ENCODE measurements at regions of chr21 and their contacts with region 1.

Region 1: GRCh38 chr21:32392880-32393676 is at the start of gene URB1:
- DNase-seq: peak; percentile 88 to 99 (median 94)
- ATAC-seq: peak; percentile 99
- H3K4me3 ChIP-seq: peak within 1 kb of the TSS; percentile 85
- H3K4me3 Mint-ChIP-seq: peak within 1 kb of the TSS; percentile 81 to 92 (median 86)
- H3K27ac ChIP-seq: peak within 1 kb of the TSS; percentile 70
- H3K27ac Mint-ChIP-seq: peak within 1 kb of the TSS; percentile 46 to 90 (median 71)
- H3K4me1 ChIP-seq: peaks cover 8 to 12% of the 10 kb centered on the region in 2 donors
- H3K4me1 Mint-ChIP-seq: peaks cover 34 to 52% (median 43%) of the 10 kb centered on the region in 7 donors
- H3K27me3 ChIP-seq: no peaks in the 10 kb centered on the region
- H3K27me3 Mint-ChIP-seq: peaks cover 2 to 20% (median 3%) of the 10 kb centered on the region in 5 donors
- total RNA-seq, gene URB1: 14.5 to 20.6 (median 17.9) TPM

Region 2: GRCh38 chr21:32233055-32233546 is 160.0 kb before region 1 on chr21:
- CTCF ChIA-PET with region 1: no interaction called
- POLR2A ChIA-PET with region 1: no interaction called
- intact Hi-C with region 1: no loop called
- DNase-seq: no peak
- ATAC-seq: no peak
- H3K4me3 ChIP-seq: no peak overlapping the region
- H3K4me3 Mint-ChIP-seq: no peak overlapping the region
- H3K27ac ChIP-seq: no peak overlapping the region
- H3K27ac Mint-ChIP-seq: no peak overlapping the region
- H3K4me1 ChIP-seq: no peaks in the 10 kb centered on the region
- H3K4me1 Mint-ChIP-seq: no peaks in the 10 kb centered on the region
- H3K27me3 ChIP-seq: no peaks in the 10 kb centered on the region
- H3K27me3 Mint-ChIP-seq: peaks cover 0 to 5% (median 0%) of the 10 kb centered on the region in 5 donors

Region 3: DNA sequence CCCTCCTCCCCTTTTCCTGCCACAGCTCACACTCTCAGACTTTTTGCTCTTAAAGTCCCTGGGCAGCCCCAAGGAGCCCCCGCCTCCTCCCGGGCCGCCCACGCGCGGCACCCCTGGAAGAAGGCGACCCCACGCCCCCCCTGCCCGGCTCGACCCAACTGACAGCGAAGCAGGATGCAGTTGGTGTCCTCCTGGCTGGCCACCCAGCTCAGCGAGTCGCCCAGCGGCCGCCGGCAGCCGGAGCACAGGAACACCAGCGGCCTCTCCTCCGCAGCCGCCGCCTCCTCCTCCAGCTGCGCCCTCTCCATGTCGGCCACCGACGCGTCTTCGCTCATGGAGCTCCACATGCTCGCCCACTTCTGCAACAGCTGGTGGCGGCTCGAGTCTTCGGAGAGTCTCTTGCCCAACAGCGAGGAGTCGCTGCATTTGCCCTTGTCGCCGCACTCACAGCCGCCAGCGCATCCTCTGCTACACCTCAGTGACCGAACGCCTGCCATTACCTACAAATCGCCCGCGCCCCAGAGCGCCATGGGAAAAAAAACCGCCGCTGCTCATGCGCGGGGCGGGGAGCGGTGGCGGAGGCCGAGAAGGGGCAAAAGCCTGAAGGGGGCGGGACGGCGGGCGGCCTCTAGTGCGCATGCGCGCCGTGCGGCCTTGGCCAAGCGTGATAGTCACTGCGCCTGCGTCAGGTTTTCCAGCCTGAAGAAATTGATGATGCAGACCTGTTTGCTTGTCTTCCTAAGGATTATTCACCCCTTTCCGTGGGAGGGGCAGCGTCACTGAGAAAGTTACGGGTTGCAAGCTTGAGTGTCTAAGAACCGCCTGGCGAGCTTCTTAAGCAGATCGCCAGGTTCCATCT is 114.3 kb before region 1 on chr21 and contains the start of gene MIS18A:
- CTCF ChIA-PET with region 1: no interaction called
- POLR2A ChIA-PET with region 1: no interaction called
- intact Hi-C with region 1: loop called (anchors 1 kb)
- DNase-seq: peak; percentile 92 to 98 (median 95)
- ATAC-seq: peak; percentile 97
- H3K4me3 ChIP-seq: peak within 1 kb of the TSS; percentile 90
- H3K4me3 Mint-ChIP-seq: peak within 1 kb of the TSS; percentile 95 to 100 (median 98)
- H3K27ac ChIP-seq: peak within 1 kb of the TSS; percentile 70
- H3K27ac Mint-ChIP-seq: peak within 1 kb of the TSS; percentile 90 to 97 (median 94)
- H3K4me1 ChIP-seq: peaks cover 14 to 16% of the 10 kb centered on the region in 2 donors
- H3K4me1 Mint-ChIP-seq: peaks cover 8 to 36% (median 33%) of the 10 kb centered on the region in 7 donors
- H3K27me3 ChIP-seq: no peaks in the 10 kb centered on the region
- H3K27me3 Mint-ChIP-seq: no peaks in the 10 kb centered on the region
- total RNA-seq, gene MIS18A: 3.3 to 16.4 (median 8.4) TPM

Region 4: GRCh38 chr21:32403201-32403777 is 10.2 kb after region 1 on chr21:
- CTCF ChIA-PET with region 1: interaction called, 5 read pairs
- POLR2A ChIA-PET with region 1: no interaction called
- intact Hi-C with region 1: loop called in 1 of 2 experiments (anchors 1 kb)
- DNase-seq: peak in 7 of 9 donors; percentile 43 to 54 (median 50)
- ATAC-seq: peak; percentile 87
- H3K4me3 ChIP-seq: no peak overlapping the region
- H3K4me3 Mint-ChIP-seq: no peak overlapping the region
- H3K27ac ChIP-seq: no peak overlapping the region
- H3K27ac Mint-ChIP-seq: no peak overlapping the region
- H3K4me1 ChIP-seq: peaks cover 0 to 4% of the 10 kb centered on the region in 2 donors
- H3K4me1 Mint-ChIP-seq: peaks cover 0 to 17% (median 0%) of the 10 kb centered on the region in 7 donors
- H3K27me3 ChIP-seq: no peaks in the 10 kb centered on the region
- H3K27me3 Mint-ChIP-seq: peaks cover 0 to 17% (median 12%) of the 10 kb centered on the region in 5 donors

Region 5: DNA sequence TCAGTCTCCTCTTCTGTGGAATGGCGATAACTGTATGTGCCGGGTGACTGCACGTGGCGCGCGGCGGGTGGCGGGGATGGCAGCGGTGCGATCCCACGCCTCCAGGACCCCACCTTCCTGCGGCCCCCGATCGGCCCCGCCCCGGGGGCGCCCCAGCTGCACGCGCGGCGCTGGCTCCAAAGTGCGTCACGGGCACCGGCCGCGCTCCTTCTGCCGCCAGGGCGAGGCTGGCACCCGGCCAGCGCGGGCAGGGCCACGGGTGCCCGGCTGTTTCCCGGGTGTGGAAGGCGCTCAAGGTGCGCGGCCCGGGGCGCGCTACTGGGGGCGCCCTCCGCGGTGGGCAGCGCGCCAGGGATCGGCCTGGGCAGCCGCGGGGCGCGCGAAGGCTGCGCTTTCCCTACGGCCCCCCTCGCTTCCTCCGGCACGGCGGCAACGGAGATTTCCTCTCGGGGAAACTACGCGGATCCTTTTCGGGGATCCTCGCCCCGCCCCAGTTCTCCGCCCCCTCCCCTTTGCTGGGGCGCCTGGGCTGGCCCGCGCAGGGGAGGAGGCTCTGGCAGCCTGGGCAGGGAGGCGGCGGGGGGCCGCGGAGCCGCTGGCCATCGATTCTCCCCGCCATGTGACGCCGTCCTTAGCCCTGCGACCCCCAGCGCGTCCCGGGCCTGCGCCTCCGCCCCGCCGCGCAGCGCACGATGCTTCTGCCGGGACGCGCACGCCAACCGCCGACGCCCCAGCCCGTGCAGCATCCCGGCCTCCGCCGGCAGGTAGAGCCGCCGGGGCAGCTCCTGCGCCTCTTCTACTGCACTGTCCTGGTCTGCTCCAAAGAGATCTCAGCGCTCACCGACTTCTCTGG is 19.3 kb after region 1 on chr21 and contains the start of gene EVA1C:
- CTCF ChIA-PET with region 1: no interaction called
- POLR2A ChIA-PET with region 1: interaction called, 10 read pairs
- intact Hi-C with region 1: loop called (anchors 1 kb)
- DNase-seq: peak; percentile 56 to 73 (median 70)
- ATAC-seq: peak; percentile 81
- H3K4me3 ChIP-seq: peak within 1 kb of the TSS; percentile 76
- H3K4me3 Mint-ChIP-seq: peak within 1 kb of the TSS; percentile 88 to 97 (median 94)
- H3K27ac ChIP-seq: peak within 1 kb of the TSS; percentile 85
- H3K27ac Mint-ChIP-seq: peak within 1 kb of the TSS; percentile 89 to 95 (median 93)
- H3K4me1 ChIP-seq: peaks cover 14 to 29% of the 10 kb centered on the region in 2 donors
- H3K4me1 Mint-ChIP-seq: peaks cover 22 to 57% (median 28%) of the 10 kb centered on the region in 7 donors
- H3K27me3 ChIP-seq: no peaks in the 10 kb centered on the region
- H3K27me3 Mint-ChIP-seq: peaks cover 0 to 7% (median 0%) of the 10 kb centered on the region in 5 donors
- total RNA-seq, gene EVA1C: 2.6 to 16.3 (median 12.3) TPM

Region 6: GRCh38 chr21:32475164-32475812 is 82.2 kb after region 1 on chr21:
- CTCF ChIA-PET with region 1: no interaction called
- POLR2A ChIA-PET with region 1: no interaction called
- intact Hi-C with region 1: no loop called
- DNase-seq: no peak
- ATAC-seq: no peak
- H3K4me3 ChIP-seq: no peak overlapping the region
- H3K4me3 Mint-ChIP-seq: no peak overlapping the region
- H3K27ac ChIP-seq: no peak overlapping the region
- H3K27ac Mint-ChIP-seq: no peak overlapping the region
- H3K4me1 ChIP-seq: no peaks in the 10 kb centered on the region
- H3K4me1 Mint-ChIP-seq: peaks cover 0 to 9% (median 0%) of the 10 kb centered on the region in 7 donors
- H3K27me3 ChIP-seq: no peaks in the 10 kb centered on the region
- H3K27me3 Mint-ChIP-seq: no peaks in the 10 kb centered on the region

Region 7: GRCh38 chr21:32507342-32507919 is 114.4 kb after region 1 on chr21:
- CTCF ChIA-PET with region 1: no interaction called
- POLR2A ChIA-PET with region 1: no interaction called
- intact Hi-C with region 1: no loop called
- DNase-seq: no peak
- ATAC-seq: no peak
- H3K4me3 ChIP-seq: no peak overlapping the region
- H3K4me3 Mint-ChIP-seq: no peak overlapping the region
- H3K27ac ChIP-seq: no peak overlapping the region
- H3K27ac Mint-ChIP-seq: no peak overlapping the region
- H3K4me1 ChIP-seq: no peaks in the 10 kb centered on the region
- H3K4me1 Mint-ChIP-seq: peaks cover 0 to 6% (median 0%) of the 10 kb centered on the region in 7 donors
- H3K27me3 ChIP-seq: no peaks in the 10 kb centered on the region
- H3K27me3 Mint-ChIP-seq: no peaks in the 10 kb centered on the region

Region 8: DNA sequence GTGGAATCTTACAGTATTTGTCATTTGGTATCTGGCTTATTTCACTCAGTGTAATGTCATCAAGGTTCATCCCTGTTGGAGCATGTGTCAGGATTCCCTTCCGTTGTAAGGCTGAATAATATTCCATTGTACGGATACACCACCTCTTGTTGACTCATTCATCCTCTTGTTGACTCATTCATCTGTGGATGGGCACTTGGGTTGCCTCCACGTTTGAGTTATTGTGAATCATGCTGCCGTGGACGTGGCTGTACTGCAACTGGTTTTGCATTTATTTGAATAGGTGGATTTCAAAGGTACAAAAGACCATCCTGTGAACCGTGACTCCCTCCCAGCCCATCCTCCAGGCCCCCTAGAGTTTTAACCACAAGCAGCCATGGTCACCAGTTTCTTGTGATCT is 204.1 kb after region 1 on chr21:
- CTCF ChIA-PET with region 1: interaction called, 9 read pairs
- POLR2A ChIA-PET with region 1: no interaction called
- intact Hi-C with region 1: loop called in 1 of 2 experiments (anchors 2 kb)
- DNase-seq: no peak
- ATAC-seq: no peak
- H3K4me3 ChIP-seq: no peak overlapping the region
- H3K4me3 Mint-ChIP-seq: no peak overlapping the region
- H3K27ac ChIP-seq: no peak overlapping the region
- H3K27ac Mint-ChIP-seq: peak overlapping the region in 1 of 9 donors; percentile 8
- H3K4me1 ChIP-seq: no peaks in the 10 kb centered on the region
- H3K4me1 Mint-ChIP-seq: peaks cover 0 to 4% (median 0%) of the 10 kb centered on the region in 7 donors
- H3K27me3 ChIP-seq: no peaks in the 10 kb centered on the region
- H3K27me3 Mint-ChIP-seq: no peaks in the 10 kb centered on the region

Region 9: DNA sequence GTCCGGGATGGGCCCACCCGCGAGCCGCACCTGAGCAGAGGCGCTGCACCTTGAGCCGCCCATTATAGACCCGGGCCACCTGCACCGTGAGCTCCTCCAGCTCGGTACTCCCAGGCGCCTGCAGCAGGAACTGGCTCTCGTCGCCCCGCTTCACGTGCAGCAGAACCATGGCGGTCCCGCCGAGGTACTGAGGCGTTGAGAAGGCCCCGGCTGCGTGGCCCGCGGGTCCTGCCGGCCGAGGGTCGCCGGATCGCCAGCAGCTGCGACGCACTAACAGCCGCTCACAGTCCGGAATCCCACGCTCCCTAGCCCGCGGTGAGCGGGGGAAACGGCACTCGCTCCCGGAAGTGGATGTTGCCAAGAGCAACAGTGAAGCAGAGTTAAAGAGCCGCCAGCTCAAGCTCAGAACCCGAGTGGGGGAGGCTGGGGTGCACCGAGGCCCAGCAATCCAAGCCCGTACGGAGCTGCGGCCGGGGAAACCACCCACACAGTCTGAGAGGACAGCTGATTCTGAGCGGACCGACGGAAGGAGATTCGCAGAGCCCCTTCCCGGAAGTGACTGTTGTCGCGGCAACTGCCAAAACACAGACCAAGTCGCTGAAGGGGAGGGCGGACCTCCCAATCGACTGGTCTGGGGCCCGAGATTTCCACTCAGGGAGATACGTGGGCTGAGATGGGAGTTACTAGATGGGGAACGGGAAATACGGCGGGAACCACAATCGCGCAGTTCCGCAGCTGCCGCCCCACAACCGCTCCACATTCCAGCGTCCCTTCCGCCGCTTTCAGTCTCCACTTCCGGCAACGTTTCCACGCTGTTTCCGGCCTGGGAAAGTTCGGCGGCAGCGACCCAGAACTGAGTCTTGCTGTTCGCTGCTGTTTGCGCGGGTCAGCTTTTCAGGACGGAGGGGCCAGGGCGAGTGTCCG is 219.3 kb after region 1 on chr21 and contains the start of gene CFAP298:
- CTCF ChIA-PET with region 1: no interaction called
- POLR2A ChIA-PET with region 1: interaction called, 3 read pairs
- intact Hi-C with region 1: loop called (anchors 1 kb)
- DNase-seq: peak; percentile 78 to 93 (median 89)
- ATAC-seq: peak; percentile 97
- H3K4me3 ChIP-seq: peak within 1 kb of the TSS; percentile 100
- H3K4me3 Mint-ChIP-seq: peak within 1 kb of the TSS; percentile 95 to 98 (median 97)
- H3K27ac ChIP-seq: peak within 1 kb of the TSS; percentile 87
- H3K27ac Mint-ChIP-seq: peak within 1 kb of the TSS; percentile 90 to 98 (median 97)
- H3K4me1 ChIP-seq: peaks cover 12% of the 10 kb centered on the region in 2 donors
- H3K4me1 Mint-ChIP-seq: peaks cover 0 to 34% (median 12%) of the 10 kb centered on the region in 7 donors
- H3K27me3 ChIP-seq: no peaks in the 10 kb centered on the region
- H3K27me3 Mint-ChIP-seq: peaks cover 0 to 15% (median 0%) of the 10 kb centered on the region in 5 donors
- total RNA-seq, gene CFAP298: 16.8 to 34.5 (median 31.3) TPM

Region 10: GRCh38 chr21:33588485-33589335 is 1195.6 kb after region 1 on chr21 and contains the start of gene DONSON:
- CTCF ChIA-PET with region 1: no interaction called
- POLR2A ChIA-PET with region 1: no interaction called
- intact Hi-C with region 1: loop called in 1 of 2 experiments (anchors 5 kb)
- DNase-seq: peak; percentile 76 to 97 (median 89)
- ATAC-seq: peak; percentile 98
- H3K4me3 ChIP-seq: peak within 1 kb of the TSS; percentile 63
- H3K4me3 Mint-ChIP-seq: peak within 1 kb of the TSS; percentile 90 to 96 (median 94)
- H3K27ac ChIP-seq: peak within 1 kb of the TSS; percentile 89
- H3K27ac Mint-ChIP-seq: peak within 1 kb of the TSS; percentile 34 to 96 (median 89)
- H3K4me1 ChIP-seq: peaks cover 5% of the 10 kb centered on the region in 2 donors
- H3K4me1 Mint-ChIP-seq: peaks cover 0 to 31% (median 20%) of the 10 kb centered on the region in 7 donors
- H3K27me3 ChIP-seq: no peaks in the 10 kb centered on the region
- H3K27me3 Mint-ChIP-seq: peaks cover 0 to 1% (median 0%) of the 10 kb centered on the region in 5 donors
- total RNA-seq, gene DONSON: 8.9 to 30.8 (median 10.7) TPM